Activated B cell treated with CpG ODN at 0.5 μM for 24 hours (primary cell): ENCODE measurements at regions of chr13 and their contacts with region 1.

Region 1: DNA sequence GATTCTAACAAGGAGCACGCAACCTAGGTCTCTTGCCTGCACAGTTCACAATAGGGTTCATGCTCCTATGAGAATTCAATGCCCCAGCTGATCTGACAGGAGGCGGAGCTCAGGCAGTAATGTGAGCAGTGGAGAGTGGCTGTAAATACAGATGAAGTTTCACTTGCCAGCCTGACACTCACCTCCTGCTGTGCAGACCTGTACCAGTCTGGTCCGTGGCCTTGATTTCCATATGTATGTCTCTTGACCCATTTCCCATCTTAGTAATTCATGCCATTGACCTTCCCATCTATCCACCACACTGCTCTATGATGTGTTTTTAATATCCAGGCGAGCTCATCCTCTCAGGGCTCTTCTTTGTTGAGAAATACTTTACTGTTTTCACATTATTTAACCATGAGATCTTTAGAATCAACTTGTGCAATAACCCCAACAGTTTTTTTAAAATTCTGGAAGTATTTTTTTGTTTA is 95.2 kb downstream of the LRCH1 start:
- DNase-seq: no peak
- ATAC-seq: peak; percentile 87
- H3K4me3 Mint-ChIP-seq: peak overlapping the region; percentile 11
- H3K27ac Mint-ChIP-seq: peak overlapping the region; percentile 46
- H3K4me1 Mint-ChIP-seq: peaks cover 70% of the 10 kb centered on the region
- H3K27me3 Mint-ChIP-seq: no peaks in the 10 kb centered on the region
- CTCF ChIP-seq: no peak

Region 2: DNA sequence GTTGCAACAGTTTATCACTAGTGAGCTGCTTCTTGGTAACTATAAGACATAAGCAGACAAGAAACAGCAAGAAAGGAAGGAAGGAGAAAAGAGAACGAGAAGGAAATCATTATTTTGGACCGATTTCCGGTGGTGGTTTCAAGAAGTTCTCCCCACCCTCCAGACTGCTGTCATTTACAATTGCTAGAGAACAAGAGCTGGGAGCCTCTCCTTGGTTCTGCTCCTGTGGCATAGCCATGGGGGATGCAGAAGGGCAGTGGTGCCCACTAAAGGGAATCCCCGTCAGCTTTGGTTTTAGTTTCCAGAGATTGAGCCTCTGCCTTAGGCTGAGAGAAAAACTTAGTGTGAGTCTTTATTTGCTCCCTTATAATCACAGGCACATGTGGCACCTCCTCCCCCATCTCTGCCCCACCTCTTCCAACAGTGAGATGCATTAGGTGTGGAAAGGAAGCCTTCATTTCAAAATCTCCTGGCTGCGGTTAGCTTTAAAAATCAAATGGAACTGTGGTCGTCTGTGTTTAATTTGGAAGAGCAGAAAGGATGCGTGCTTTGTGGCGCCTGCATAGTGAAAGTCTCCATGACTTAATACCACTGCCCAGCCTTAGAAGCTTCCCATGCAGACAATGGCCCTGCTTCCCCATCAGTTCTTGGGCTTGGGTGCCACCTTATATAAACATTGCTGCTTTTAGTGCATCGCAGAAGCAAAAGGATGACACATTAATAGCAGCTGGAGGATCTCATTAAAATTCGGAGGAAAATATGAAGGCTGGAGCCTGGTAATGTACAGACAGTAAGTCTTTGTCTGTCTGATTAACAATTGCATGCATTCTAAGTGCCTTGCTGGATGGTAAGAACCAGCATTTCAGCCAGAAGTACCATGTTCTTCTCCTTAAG is 70.3 kb before region 1 on chr13:
- CTCF ChIA-PET with region 1: no interaction called
- POLR2A ChIA-PET with region 1: interaction called, 10 read pairs
- intact Hi-C with region 1: no loop called
- DNase-seq: no peak
- ATAC-seq: peak; percentile 41
- H3K4me3 Mint-ChIP-seq: peak overlapping the region; percentile 65
- H3K27ac Mint-ChIP-seq: peak overlapping the region; percentile 90
- H3K4me1 Mint-ChIP-seq: peaks cover 87% of the 10 kb centered on the region
- H3K27me3 Mint-ChIP-seq: no peaks in the 10 kb centered on the region
- CTCF ChIP-seq: no peak

Region 3: DNA sequence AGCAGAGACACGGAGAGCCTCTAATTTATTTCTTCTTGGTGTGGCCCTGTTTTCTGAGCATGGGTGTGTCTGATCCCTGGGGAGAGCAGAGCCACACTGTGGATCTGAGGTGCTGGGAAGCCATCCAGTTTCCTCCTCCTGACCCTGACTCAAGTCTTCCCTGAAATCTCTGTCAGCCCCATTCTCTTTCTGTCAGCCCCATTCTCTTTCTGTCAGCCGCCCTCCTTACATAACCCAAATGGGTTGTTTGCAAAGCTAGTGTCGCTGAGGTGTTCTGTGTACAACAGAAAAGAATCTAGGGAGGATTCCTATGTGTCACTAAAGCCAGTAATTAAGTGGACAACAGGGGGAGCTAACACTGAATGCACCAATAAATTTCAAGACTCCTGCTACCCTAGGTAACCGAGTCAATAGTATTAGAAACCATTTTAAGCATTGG is 45.0 kb before region 1 on chr13:
- CTCF ChIA-PET with region 1: no interaction called
- POLR2A ChIA-PET with region 1: interaction called, 3 read pairs
- intact Hi-C with region 1: loop called (anchors 2 kb)
- DNase-seq: no peak
- ATAC-seq: no peak
- H3K4me3 Mint-ChIP-seq: no peak overlapping the region
- H3K27ac Mint-ChIP-seq: no peak overlapping the region
- H3K4me1 Mint-ChIP-seq: peaks cover 92% of the 10 kb centered on the region
- H3K27me3 Mint-ChIP-seq: no peaks in the 10 kb centered on the region
- CTCF ChIP-seq: no peak

Region 4: GRCh38 chr13:46630431-46631178 is 17.6 kb before region 1 on chr13:
- CTCF ChIA-PET with region 1: interaction called, 3 read pairs
- POLR2A ChIA-PET with region 1: interaction called, 14 read pairs
- intact Hi-C with region 1: loop called (anchors 2 kb)
- DNase-seq: no peak
- ATAC-seq: peak; percentile 34
- H3K4me3 Mint-ChIP-seq: peak overlapping the region; percentile 29
- H3K27ac Mint-ChIP-seq: peak overlapping the region; percentile 67
- H3K4me1 Mint-ChIP-seq: peaks cover 83% of the 10 kb centered on the region
- H3K27me3 Mint-ChIP-seq: no peaks in the 10 kb centered on the region
- CTCF ChIP-seq: no peak

Region 5: DNA sequence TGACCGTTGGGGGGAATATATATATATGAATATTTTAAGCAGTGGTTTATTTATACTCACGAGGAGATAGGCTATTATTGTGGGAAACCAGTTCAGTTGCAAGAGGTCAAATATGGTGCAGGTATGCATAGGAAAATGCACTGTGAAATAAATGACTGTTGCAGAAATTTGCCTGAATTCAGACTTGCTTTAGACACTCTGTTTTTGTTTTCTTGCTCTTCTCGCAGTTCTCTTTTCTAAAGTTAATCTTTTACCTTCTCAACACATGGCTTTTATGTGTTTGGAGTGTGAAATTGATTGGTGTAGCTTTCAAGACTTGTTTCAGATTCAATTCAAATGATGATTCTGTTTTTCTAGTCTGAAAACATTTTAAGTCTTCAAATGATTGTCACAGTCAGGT is 14.5 kb after region 1 on chr13:
- CTCF ChIA-PET with region 1: interaction called, 6 read pairs
- POLR2A ChIA-PET with region 1: interaction called, 5 read pairs
- intact Hi-C with region 1: loop called (anchors 2 kb)
- DNase-seq: no peak
- ATAC-seq: no peak
- H3K4me3 Mint-ChIP-seq: no peak overlapping the region
- H3K27ac Mint-ChIP-seq: peak overlapping the region; percentile 19
- H3K4me1 Mint-ChIP-seq: peaks cover 71% of the 10 kb centered on the region
- H3K27me3 Mint-ChIP-seq: no peaks in the 10 kb centered on the region
- CTCF ChIP-seq: no peak

Region 6: GRCh38 chr13:46893798-46894560 is 245.8 kb after region 1 on chr13:
- CTCF ChIA-PET with region 1: no interaction called
- POLR2A ChIA-PET with region 1: no interaction called
- intact Hi-C with region 1: no loop called
- DNase-seq: peak; percentile 67
- ATAC-seq: peak; percentile 91
- H3K4me3 Mint-ChIP-seq: peak overlapping the region; percentile 74
- H3K27ac Mint-ChIP-seq: no peak overlapping the region
- H3K4me1 Mint-ChIP-seq: peaks cover 24% of the 10 kb centered on the region
- H3K27me3 Mint-ChIP-seq: peaks cover 32% of the 10 kb centered on the region
- CTCF ChIP-seq: peak; percentile 72